ENCODE measurements at regions of chr2 and their contacts with region 1.

Region 1: GRCh38 chr2:9474361-9474967 is at the start of gene IAH1:
- DNase-seq: peak; percentile 57
- H3K4me3 Mint-ChIP-seq: peak within 1 kb of the TSS; percentile 75
- H3K27ac Mint-ChIP-seq: peak within 1 kb of the TSS; percentile 72
- H3K4me1 Mint-ChIP-seq: peaks cover 33% of the 10 kb centered on the region
- H3K27me3 Mint-ChIP-seq: no peaks in the 10 kb centered on the region
- total RNA-seq, gene IAH1: 65.4 to 70.2 TPM

Region 2: DNA sequence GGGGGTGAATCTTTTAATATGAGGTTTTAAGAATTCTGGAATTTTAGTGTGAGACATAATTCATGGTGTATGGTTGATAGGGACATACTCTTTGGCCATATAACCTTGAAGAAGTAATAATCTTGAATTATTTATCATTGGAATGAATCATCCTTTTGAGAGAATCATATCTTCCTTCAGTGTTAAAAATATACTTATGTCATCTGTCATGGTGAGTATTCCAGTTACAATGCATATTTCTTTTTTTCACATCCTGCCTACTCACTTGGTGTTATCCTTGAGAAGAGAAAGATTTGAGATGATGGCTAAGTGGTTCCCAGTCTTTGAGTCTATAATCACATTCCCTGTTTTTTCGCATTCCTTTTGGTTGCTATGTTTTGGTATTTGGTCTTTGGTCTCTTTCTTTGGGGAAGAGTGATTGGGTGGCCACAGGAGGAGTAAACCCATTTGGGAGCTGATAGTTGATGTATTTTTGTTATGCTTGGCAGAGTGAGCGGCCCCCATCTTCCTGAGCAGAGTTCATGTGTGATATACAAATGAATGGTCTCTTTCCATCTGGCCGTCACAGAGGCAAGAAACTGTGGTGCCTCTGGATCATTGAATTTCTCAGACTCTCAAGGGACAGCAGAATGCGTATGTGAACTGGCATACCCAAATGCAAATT is 246.2 kb before region 1 on chr2:
- CTCF ChIA-PET with region 1: no interaction called
- intact Hi-C with region 1: no loop called
- DNase-seq: no peak
- H3K4me3 Mint-ChIP-seq: no peak overlapping the region
- H3K27ac Mint-ChIP-seq: no peak overlapping the region
- H3K4me1 Mint-ChIP-seq: no peaks in the 10 kb centered on the region
- H3K27me3 Mint-ChIP-seq: peaks cover 15% of the 10 kb centered on the region

Region 3: DNA sequence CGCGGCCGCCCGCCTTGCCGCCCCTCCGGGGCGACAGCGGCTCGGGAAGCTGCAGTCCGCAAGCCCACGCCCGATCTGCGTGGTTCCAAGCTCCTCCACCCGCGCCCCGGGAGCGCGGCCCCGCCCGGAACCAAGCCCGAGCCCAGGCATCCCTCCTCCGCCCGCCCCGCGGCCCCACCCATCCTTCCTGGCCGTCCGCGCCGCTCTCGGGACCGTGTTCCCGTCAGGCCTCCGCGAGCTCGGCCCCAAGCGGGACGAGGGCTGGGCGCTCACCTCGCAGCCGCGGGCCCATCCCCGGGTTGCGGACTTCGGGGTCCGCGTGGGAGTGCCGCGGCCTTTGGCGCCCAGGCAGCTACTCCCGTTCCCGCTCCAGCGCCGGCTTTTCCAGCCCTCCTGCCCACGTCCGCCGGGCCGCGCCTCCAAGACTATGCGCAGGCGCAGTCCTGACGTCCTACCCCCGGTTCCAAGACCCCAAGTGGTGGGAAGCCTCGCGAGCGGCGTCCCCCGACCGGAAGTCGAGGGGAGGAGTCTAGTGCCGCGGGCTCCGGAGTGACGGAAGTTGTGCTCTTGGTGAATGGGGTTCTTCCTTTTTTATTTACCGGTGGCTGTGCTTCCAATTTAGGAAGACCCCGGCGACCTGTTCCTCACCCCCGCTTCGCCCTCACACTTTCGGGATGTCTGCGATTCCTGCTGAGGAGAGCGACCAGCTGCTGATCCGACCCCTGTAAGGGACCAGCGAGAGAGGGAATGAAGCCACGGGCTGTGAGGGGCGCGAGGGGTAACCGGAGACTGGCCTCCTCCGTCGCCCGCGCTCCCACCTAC is 51.2 kb before region 1 on chr2 and contains the starts of genes CPSF3 and ITGB1BP1:
- CTCF ChIA-PET with region 1: no interaction called
- intact Hi-C with region 1: loop called (anchors 1 kb)
- DNase-seq: peak; percentile 97
- H3K4me3 Mint-ChIP-seq: no peak within 1 kb of the TSS
- H3K27ac Mint-ChIP-seq: peak within 1 kb of the TSS; percentile 92
- H3K4me1 Mint-ChIP-seq: peaks cover 39% of the 10 kb centered on the region
- H3K27me3 Mint-ChIP-seq: no peaks in the 10 kb centered on the region
- total RNA-seq, gene CPSF3: 64.5 to 65.7 TPM
- total RNA-seq, gene ITGB1BP1: 97.2 to 97.4 TPM

Region 4: DNA sequence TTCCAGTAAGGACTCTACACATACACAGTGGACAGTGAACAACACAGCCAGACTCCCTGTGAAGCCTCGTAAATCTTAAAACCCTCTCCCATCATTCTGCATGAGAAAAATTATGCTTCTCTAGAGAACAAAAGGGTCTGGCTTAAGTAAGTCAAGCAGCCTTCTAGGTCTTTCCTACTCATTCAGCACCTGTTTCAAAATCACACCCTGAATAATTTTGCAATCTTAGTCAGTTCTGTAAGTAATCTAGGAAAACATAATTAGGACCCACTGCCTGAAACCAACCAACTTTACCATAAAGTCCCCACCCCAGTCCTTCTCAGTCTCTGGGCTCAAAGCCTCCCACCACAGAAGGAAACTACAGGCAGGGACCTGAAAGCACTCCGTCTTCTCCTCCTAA is 19.6 kb after region 1 on chr2:
- CTCF ChIA-PET with region 1: no interaction called
- intact Hi-C with region 1: loop called (anchors 2 kb)
- DNase-seq: no peak
- H3K4me3 Mint-ChIP-seq: no peak overlapping the region
- H3K27ac Mint-ChIP-seq: peak overlapping the region; percentile 61
- H3K4me1 Mint-ChIP-seq: peaks cover 32% of the 10 kb centered on the region
- H3K27me3 Mint-ChIP-seq: no peaks in the 10 kb centered on the region

Region 5: DNA sequence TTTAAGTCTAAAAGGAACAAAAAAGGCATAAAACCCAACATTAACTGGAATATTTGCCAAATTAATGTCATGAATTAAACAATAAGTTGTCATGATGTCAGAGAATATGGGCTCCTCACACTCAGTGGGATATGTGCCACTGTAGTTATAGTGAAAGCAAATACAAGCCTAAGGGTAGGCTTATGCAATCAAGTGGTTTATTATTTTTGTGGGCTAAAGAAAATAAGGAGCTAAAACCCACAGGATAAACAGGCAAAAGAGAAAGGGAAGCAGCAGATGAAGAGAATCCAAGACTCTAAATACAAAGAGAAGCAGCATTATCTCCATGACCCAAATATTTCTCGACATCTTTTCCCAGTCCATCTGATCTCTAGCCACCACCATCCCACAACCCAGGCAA is 138.8 kb after region 1 on chr2:
- CTCF ChIA-PET with region 1: no interaction called
- intact Hi-C with region 1: loop called (anchors 1 kb)
- DNase-seq: no peak
- H3K4me3 Mint-ChIP-seq: no peak overlapping the region
- H3K27ac Mint-ChIP-seq: no peak overlapping the region
- H3K4me1 Mint-ChIP-seq: peaks cover 78% of the 10 kb centered on the region
- H3K27me3 Mint-ChIP-seq: no peaks in the 10 kb centered on the region

Region 6: DNA sequence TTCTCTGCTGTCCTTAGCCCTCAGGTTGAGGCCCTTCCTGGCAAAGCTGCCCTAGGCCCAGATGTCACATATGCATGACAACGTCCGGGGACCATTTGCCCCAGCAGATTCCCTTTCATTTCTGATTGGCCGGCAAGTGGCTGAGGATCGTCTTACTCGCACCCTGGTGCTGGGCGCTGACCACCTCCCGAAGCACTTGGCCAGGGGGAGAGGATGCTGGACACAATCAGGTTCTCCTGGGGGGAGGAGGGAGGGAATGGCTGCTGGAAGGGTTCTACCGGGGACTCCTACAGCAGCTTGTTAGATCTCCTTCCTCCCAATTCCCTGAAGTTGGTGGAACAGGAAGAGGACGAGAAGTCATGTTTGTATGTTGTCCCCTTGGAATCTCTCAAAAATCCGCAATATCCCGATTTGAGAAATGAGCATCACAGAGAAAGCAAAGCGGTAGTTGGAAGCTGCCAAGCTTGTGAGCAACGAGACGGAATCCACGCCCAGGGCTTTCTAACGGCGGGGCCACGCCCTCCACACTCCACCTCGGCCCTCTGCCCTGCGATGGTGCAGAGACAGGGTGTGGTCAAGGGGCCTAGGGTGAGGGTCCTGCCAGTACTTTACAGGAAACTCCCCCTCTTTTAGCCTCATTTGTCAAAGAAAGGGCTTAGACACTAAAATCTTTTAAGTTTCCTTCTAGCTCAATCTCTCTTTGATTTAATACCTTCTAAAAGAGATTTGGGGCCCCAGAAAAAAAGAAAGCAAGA is 218.2 kb after region 1 on chr2:
- CTCF ChIA-PET with region 1: no interaction called
- intact Hi-C with region 1: no loop called
- DNase-seq: no peak
- H3K4me3 Mint-ChIP-seq: no peak overlapping the region
- H3K27ac Mint-ChIP-seq: no peak overlapping the region
- H3K4me1 Mint-ChIP-seq: no peaks in the 10 kb centered on the region
- H3K27me3 Mint-ChIP-seq: no peaks in the 10 kb centered on the region

Region 7: GRCh38 chr2:9703085-9703641 is 228.7 kb after region 1 on chr2:
- CTCF ChIA-PET with region 1: no interaction called
- intact Hi-C with region 1: loop called (anchors 10 kb)
- DNase-seq: peak; percentile 87
- H3K4me3 Mint-ChIP-seq: no peak overlapping the region
- H3K27ac Mint-ChIP-seq: no peak overlapping the region
- H3K4me1 Mint-ChIP-seq: peaks cover 25% of the 10 kb centered on the region
- H3K27me3 Mint-ChIP-seq: no peaks in the 10 kb centered on the region

Region 8: DNA sequence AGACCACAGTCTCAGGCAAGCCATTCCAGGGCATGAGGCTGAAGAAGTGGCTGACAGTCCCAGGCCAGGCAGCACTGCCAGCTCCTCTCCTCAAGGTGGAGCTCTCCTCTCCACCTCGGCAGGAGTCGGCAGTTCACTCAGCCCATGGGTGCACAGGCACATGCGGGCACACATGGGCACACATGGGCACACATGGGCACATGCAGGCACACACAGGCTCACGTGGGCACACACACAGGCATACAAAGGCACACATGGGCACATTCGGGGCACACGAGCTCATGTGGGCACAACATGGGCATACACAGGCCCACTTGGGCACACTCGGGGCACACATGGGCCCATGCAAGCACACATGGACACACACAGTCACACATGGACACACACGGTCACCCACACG is 303.5 kb after region 1 on chr2:
- CTCF ChIA-PET with region 1: no interaction called
- intact Hi-C with region 1: loop called (anchors 1 kb)
- DNase-seq: peak; percentile 42
- H3K4me3 Mint-ChIP-seq: no peak overlapping the region
- H3K27ac Mint-ChIP-seq: no peak overlapping the region
- H3K4me1 Mint-ChIP-seq: peaks cover 40% of the 10 kb centered on the region
- H3K27me3 Mint-ChIP-seq: no peaks in the 10 kb centered on the region